IMR-90 (cell line): ENCODE measurements at regions of chr6 and their contacts with region 1.

Region 1: GRCh38 chr6:25263657-25264056 is 15.5 kb upstream of the CARMIL1 start:
- DNase-seq: peak; percentile 40
- ATAC-seq: peak; percentile 67
- H3K4me3 ChIP-seq: no peak overlapping the region
- H3K27ac ChIP-seq: no peak overlapping the region
- H3K4me1 ChIP-seq: no peaks in the 10 kb centered on the region
- H3K27me3 ChIP-seq: no peaks in the 10 kb centered on the region
- CTCF ChIP-seq: no peak
- POLR2A ChIP-seq: no peak
- RAD21 ChIP-seq: no peak

Region 2: GRCh38 chr6:24332306-24332705 is 931.4 kb before region 1 on chr6:
- CTCF ChIA-PET with region 1: no interaction called
- POLR2A ChIA-PET with region 1: no interaction called
- dilution Hi-C with region 1: no loop called
- in situ Hi-C with region 1: no loop called
- intact Hi-C with region 1: no loop called
- DNase-seq: no peak
- ATAC-seq: no peak
- H3K4me3 ChIP-seq: no peak overlapping the region
- H3K27ac ChIP-seq: no peak overlapping the region
- H3K4me1 ChIP-seq: no peaks in the 10 kb centered on the region
- H3K27me3 ChIP-seq: no peaks in the 10 kb centered on the region
- CTCF ChIP-seq: no peak
- POLR2A ChIP-seq: no peak
- RAD21 ChIP-seq: no peak

Region 3: GRCh38 chr6:25017932-25018567 is 245.6 kb before region 1 on chr6:
- CTCF ChIA-PET with region 1: no interaction called
- POLR2A ChIA-PET with region 1: no interaction called
- dilution Hi-C with region 1: no loop called
- in situ Hi-C with region 1: no loop called
- intact Hi-C with region 1: no loop called
- DNase-seq: peak; percentile 65
- ATAC-seq: 0 out of 2 replicates have a peak, but pooled peaks have one; percentile 22
- H3K4me3 ChIP-seq: no peak overlapping the region
- H3K27ac ChIP-seq: no peak overlapping the region
- H3K4me1 ChIP-seq: peaks cover 12% of the 10 kb centered on the region
- H3K27me3 ChIP-seq: no peaks in the 10 kb centered on the region
- CTCF ChIP-seq: peak; percentile 67
- POLR2A ChIP-seq: no peak
- RAD21 ChIP-seq: peak; percentile 82

Region 4: GRCh38 chr6:25223490-25223991 is 40.1 kb before region 1 on chr6:
- CTCF ChIA-PET with region 1: interaction called, 9 read pairs
- POLR2A ChIA-PET with region 1: no interaction called
- dilution Hi-C with region 1: no loop called
- in situ Hi-C with region 1: no loop called
- intact Hi-C with region 1: loop called (anchors 1 kb)
- DNase-seq: peak; percentile 73
- ATAC-seq: peak; percentile 96
- H3K4me3 ChIP-seq: no peak overlapping the region
- H3K27ac ChIP-seq: no peak overlapping the region
- H3K4me1 ChIP-seq: no peaks in the 10 kb centered on the region
- H3K27me3 ChIP-seq: no peaks in the 10 kb centered on the region
- CTCF ChIP-seq: peak; percentile 95
- POLR2A ChIP-seq: no peak
- RAD21 ChIP-seq: peak; percentile 94

Region 5: DNA sequence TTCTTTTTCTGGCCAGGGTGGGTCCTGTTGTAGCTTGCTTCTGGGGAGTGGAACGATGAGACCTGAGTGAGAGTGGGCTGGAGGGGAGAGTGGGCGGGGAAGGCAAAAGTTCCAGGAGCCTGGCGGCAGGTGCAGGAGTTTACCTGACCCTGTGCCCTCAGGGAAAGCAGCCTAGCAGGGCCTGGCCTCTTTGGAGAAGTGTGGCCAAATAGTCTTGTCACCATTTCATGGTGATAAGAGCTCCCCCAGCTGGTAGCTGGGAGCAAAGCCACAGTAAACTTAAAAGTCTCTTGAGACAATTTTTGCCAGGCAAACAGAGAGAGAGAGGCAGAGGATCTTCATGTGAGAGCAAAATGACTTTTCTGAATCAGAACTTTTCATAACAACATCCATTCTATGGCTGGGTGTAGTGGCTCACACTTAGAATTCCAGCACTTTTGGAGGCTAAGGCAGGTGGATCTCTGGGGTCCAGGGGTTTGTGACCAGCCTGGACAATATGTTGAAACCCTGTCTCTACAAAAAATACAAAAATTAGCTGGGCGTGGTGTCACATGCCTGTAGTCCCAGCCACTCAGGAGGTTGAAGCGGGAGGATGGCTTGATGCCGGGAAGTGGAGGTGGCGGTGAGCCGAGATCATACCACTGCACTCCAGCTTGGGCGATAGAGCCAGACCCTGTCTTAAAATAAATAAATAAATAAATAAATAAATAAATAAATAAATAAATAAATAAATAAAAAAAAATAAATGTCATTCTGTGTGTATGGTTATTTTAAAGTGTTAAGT is 226.6 kb after region 1 on chr6:
- CTCF ChIA-PET with region 1: interaction called, 23 read pairs
- POLR2A ChIA-PET with region 1: no interaction called
- dilution Hi-C with region 1: no loop called
- in situ Hi-C with region 1: no loop called
- intact Hi-C with region 1: loop called (anchors 1 kb)
- DNase-seq: peak; percentile 73
- ATAC-seq: peak; percentile 96
- H3K4me3 ChIP-seq: no peak overlapping the region
- H3K27ac ChIP-seq: no peak overlapping the region
- H3K4me1 ChIP-seq: no peaks in the 10 kb centered on the region
- H3K27me3 ChIP-seq: no peaks in the 10 kb centered on the region
- CTCF ChIP-seq: peak; percentile 86
- POLR2A ChIP-seq: no peak
- RAD21 ChIP-seq: peak; percentile 77

Region 6: GRCh38 chr6:25556516-25556915 is 292.9 kb after region 1 on chr6:
- CTCF ChIA-PET with region 1: interaction called, 21 read pairs
- POLR2A ChIA-PET with region 1: no interaction called
- dilution Hi-C with region 1: no loop called
- in situ Hi-C with region 1: loop called (anchors 10 kb)
- intact Hi-C with region 1: loop called (anchors 1 kb)
- DNase-seq: peak; percentile 74
- ATAC-seq: peak; percentile 77
- H3K4me3 ChIP-seq: no peak overlapping the region
- H3K27ac ChIP-seq: no peak overlapping the region
- H3K4me1 ChIP-seq: no peaks in the 10 kb centered on the region
- H3K27me3 ChIP-seq: no peaks in the 10 kb centered on the region
- CTCF ChIP-seq: peak; percentile 77
- POLR2A ChIP-seq: no peak
- RAD21 ChIP-seq: peak; percentile 66

Region 7: GRCh38 chr6:25564943-25565342 is 301.3 kb after region 1 on chr6:
- CTCF ChIA-PET with region 1: interaction called, 3 read pairs
- POLR2A ChIA-PET with region 1: no interaction called
- dilution Hi-C with region 1: no loop called
- in situ Hi-C with region 1: loop called (anchors 10 kb)
- intact Hi-C with region 1: no loop called
- DNase-seq: no peak
- ATAC-seq: no peak
- H3K4me3 ChIP-seq: no peak overlapping the region
- H3K27ac ChIP-seq: no peak overlapping the region
- H3K4me1 ChIP-seq: no peaks in the 10 kb centered on the region
- H3K27me3 ChIP-seq: no peaks in the 10 kb centered on the region
- CTCF ChIP-seq: no peak
- POLR2A ChIP-seq: no peak
- RAD21 ChIP-seq: no peak

Region 8: DNA sequence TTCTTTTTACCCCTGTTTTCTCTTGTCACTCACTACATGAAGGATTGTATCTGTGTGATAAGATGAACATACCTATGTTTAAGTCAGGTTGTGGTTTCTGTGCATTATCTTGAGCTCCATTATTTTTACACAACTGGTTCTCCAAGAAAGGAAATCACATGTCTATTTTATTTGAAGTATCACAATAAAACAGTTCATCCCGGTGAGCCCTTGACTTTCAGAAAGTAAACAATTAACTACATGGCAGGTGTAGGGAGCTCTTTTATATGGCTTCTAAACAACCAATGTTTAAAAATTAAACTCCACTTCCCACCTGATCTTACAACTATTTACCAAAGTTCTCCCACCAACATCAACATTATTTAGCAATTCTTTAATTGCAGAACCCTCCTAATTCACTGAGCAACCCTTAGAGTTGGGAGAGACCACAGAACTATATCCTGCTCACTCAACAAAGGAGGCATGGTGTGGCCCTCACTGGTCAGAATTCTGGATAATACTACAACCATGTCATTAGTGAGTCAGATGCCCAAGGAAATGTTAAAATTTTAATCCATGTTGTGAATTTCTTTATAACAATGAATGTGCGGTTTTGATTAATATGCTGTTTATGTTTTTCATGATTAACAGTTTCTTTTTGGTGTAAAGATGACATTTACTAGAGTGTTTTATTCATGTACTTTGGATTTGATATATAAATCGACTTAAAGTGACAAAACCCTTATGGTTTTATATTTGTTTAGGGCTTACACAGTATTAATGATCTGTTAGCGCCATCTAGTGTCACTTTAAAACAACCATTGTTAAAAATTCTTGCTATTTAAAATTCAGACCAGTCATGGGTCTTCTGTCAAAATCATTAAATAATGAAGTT is 338.4 kb after region 1 on chr6:
- CTCF ChIA-PET with region 1: no interaction called
- POLR2A ChIA-PET with region 1: no interaction called
- dilution Hi-C with region 1: no loop called
- in situ Hi-C with region 1: no loop called
- intact Hi-C with region 1: loop called (anchors 1 kb)
- DNase-seq: peak; percentile 67
- ATAC-seq: peak; percentile 62
- H3K4me3 ChIP-seq: no peak overlapping the region
- H3K27ac ChIP-seq: no peak overlapping the region
- H3K4me1 ChIP-seq: no peaks in the 10 kb centered on the region
- H3K27me3 ChIP-seq: no peaks in the 10 kb centered on the region
- CTCF ChIP-seq: peak; percentile 72
- POLR2A ChIP-seq: no peak
- RAD21 ChIP-seq: peak; percentile 71

Region 9: DNA sequence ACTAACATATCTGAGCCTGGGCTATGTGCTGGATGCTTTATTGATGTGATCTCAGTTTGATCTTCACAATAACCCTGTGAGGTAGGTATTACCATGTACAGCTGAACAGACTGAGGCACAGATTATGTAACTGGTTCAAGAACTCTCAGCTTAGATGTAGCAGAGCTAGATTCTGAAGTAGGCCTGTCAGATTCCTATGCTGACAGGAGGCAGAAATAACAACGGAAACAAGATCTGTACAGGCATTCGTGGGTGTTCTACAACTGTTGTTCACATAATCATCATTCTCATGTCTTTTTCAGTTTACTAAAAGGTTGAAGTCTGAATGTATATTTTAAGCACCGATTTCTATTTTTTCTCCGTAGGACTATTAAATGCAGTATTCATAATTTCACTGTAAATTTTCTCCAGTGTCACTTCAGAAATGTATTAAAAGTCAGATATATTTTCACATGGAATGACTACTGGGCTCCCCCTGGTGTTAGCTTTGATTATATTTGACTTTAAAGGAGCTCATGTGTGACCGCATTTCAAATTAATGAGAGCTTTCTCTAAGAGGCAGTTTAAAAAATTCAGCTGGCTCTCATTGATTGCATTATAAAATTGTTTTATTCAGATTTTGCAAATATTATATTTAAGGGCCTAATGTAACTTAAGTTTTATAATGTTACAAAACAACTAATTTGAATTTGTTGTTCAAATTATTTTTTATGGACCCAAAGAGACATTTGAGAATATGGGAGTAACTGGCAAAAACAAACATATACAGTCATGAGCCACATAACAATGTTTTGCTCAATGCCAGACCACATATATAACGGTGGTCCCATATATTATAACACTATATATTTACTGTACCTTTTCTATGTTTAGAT is 454.4 kb after region 1 on chr6:
- CTCF ChIA-PET with region 1: no interaction called
- POLR2A ChIA-PET with region 1: no interaction called
- dilution Hi-C with region 1: no loop called
- in situ Hi-C with region 1: no loop called
- intact Hi-C with region 1: loop called (anchors 10 kb)
- DNase-seq: peak; percentile 6
- ATAC-seq: peak; percentile 63; the same call in 1 of the 2 replicates
- H3K4me3 ChIP-seq: no peak overlapping the region
- H3K27ac ChIP-seq: no peak overlapping the region
- H3K4me1 ChIP-seq: no peaks in the 10 kb centered on the region
- H3K27me3 ChIP-seq: no peaks in the 10 kb centered on the region
- CTCF ChIP-seq: peak; percentile 53
- POLR2A ChIP-seq: no peak
- RAD21 ChIP-seq: no peak